ENCODE measurements at regions of chr7 and their contacts with region 1.

Region 1: DNA sequence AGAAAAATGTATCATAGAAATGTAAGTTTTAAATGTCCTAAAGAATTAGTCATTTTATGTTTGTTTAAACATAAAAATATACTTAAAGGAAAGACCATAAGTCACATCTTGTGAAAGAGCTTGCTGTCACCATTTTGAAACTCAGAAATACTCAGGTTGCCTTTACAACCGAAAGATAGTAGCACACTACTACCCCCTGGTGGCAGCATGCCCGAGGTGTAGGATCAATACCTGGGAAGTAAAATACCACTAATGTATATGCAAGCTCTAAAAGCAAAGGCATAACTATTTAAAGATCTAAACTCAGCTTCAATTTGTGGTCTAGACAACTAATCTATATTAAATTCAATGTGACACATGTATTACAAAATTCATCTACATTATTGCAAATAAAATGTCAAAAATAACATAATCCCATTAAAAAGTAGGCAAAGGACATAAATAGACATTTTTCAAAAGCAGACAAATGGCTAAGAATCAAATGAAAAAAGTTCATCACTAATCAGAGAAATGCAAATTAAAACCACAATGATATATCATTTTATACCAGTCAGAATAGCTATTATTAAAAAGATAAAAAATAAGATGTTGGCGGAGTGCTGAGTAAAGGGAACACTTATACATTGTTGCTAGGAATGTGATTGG is 47.7 kb upstream of the FGL2 start:
- DNase-seq: peak; percentile 69 to 91 (median 85)
- ATAC-seq: peak; percentile 100
- H3K4me3 ChIP-seq: no peak overlapping the region
- H3K4me3 Mint-ChIP-seq: no peak overlapping the region
- H3K27ac ChIP-seq: no peak overlapping the region
- H3K27ac Mint-ChIP-seq: no peak overlapping the region
- H3K4me1 ChIP-seq: no peaks in the 10 kb centered on the region
- H3K4me1 Mint-ChIP-seq: no peaks in the 10 kb centered on the region
- H3K27me3 ChIP-seq: no peaks in the 10 kb centered on the region
- H3K27me3 Mint-ChIP-seq: no peaks in the 10 kb centered on the region
- CTCF ChIP-seq: peak; percentile 95

Region 2: GRCh38 chr7:76515999-76516443 is 731.3 kb before region 1 on chr7:
- CTCF ChIA-PET with region 1: interaction called, 3 read pairs
- POLR2A ChIA-PET with region 1: no interaction called
- intact Hi-C with region 1: loop called in 1 of 2 experiments (anchors 10 kb)
- DNase-seq: peak in 2 of 9 experiments; percentile 40 to 50
- ATAC-seq: peak; percentile 70
- H3K4me3 ChIP-seq: no peak overlapping the region
- H3K4me3 Mint-ChIP-seq: no peak overlapping the region
- H3K27ac ChIP-seq: no peak overlapping the region
- H3K27ac Mint-ChIP-seq: no peak overlapping the region
- H3K4me1 ChIP-seq: no peaks in the 10 kb centered on the region
- H3K4me1 Mint-ChIP-seq: no peaks in the 10 kb centered on the region
- H3K27me3 ChIP-seq: no peaks in the 10 kb centered on the region
- H3K27me3 Mint-ChIP-seq: no peaks in the 10 kb centered on the region
- CTCF ChIP-seq: peak; percentile 58

Region 3: DNA sequence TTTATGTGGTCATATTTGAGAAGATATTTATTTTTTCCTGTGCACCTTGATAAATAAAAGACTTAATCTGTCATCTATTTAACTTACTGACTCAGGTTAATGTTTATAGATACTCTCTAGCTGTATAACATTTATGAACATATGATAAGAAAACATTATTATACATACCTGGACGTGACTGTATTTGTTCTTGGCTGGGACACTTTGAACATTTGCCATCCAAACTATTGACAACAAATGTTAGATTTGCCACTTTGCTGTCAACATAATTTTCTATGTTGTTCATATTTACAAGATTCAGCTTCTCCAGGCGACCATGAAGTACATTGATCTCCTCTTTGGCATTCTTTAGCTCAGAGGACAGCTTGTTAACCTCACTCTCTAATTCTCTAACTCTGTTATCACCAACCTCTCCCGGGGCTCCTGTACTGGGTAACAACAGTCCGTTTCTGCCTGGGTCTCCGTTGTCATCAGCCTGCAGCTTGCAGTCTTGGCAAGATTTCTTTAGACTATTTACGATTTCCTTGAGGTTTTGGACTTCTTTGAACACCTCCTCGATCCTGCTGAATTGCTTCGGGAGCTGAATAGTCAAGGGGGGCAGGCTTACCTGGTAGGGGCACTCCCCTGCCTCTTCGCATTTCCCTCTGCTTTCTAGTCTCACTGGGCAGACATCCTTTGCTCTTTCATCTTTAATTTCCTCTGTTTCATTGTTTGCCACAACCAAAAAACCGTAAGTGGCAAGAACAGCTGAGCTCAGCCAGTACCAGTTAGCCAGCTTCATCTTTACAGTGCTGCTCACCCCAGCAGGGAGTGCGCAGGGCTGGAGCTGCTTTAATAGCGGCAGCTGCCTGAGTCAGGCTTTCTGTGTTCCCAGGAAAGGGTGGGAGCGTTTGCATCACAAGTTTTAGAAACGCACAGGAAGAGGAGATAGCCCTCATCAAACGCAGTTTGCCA is 48.0 kb before region 1 on chr7 and contains the start of gene FGL2:
- CTCF ChIA-PET with region 1: interaction called, 5 read pairs
- POLR2A ChIA-PET with region 1: no interaction called
- intact Hi-C with region 1: loop called in 1 of 2 experiments (anchors 5 kb)
- DNase-seq: peak in 6 of 9 experiments; percentile 26 to 73 (median 33)
- ATAC-seq: peak; percentile 75
- H3K4me3 ChIP-seq: peak within 1 kb of the TSS; percentile 36 to 68
- H3K4me3 Mint-ChIP-seq: peak within 1 kb of the TSS; percentile 83
- H3K27ac ChIP-seq: peak within 1 kb of the TSS; percentile 0 to 79
- H3K27ac Mint-ChIP-seq: peak within 1 kb of the TSS; percentile 73
- H3K4me1 ChIP-seq: peaks cover 21% of the 10 kb centered on the region
- H3K4me1 Mint-ChIP-seq: peaks cover 31% of the 10 kb centered on the region
- H3K27me3 ChIP-seq: no peaks in the 10 kb centered on the region
- H3K27me3 Mint-ChIP-seq: no peaks in the 10 kb centered on the region
- CTCF ChIP-seq: no peak
- total RNA-seq, gene FGL2: 0.16 TPM in 1 of 2 experiments, not detected in the other

Region 4: DNA sequence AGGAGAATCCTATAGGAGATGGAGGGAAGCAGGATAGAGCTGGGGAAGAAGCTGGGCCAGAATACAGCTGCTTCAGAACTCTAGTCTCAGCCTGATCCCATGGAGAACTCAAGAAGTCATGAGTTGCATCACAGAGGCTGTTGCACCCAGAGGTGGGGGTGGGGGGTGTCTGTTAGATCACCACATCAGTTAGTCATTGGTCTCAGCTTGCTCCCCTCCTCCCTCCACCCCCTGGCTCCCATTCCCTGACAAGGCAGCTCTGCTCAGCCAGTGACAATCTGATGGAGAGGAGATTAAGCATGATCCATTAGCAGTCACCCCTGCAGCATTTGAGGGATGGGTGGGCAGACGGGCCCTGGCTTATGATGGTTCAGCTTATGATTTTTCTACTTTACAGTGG is 10.7 kb after region 1 on chr7:
- CTCF ChIA-PET with region 1: interaction called, 12 read pairs
- POLR2A ChIA-PET with region 1: interaction called, 3 read pairs
- intact Hi-C with region 1: no loop called
- DNase-seq: no peak
- ATAC-seq: no peak
- H3K4me3 ChIP-seq: no peak overlapping the region
- H3K4me3 Mint-ChIP-seq: no peak overlapping the region
- H3K27ac ChIP-seq: no peak overlapping the region
- H3K27ac Mint-ChIP-seq: no peak overlapping the region
- H3K4me1 ChIP-seq: no peaks in the 10 kb centered on the region
- H3K4me1 Mint-ChIP-seq: no peaks in the 10 kb centered on the region
- H3K27me3 ChIP-seq: no peaks in the 10 kb centered on the region
- H3K27me3 Mint-ChIP-seq: no peaks in the 10 kb centered on the region
- CTCF ChIP-seq: no peak

Region 5: GRCh38 chr7:77331938-77332695 is 84.8 kb after region 1 on chr7:
- CTCF ChIA-PET with region 1: interaction called, 12 read pairs
- POLR2A ChIA-PET with region 1: interaction called, 3 read pairs
- intact Hi-C with region 1: loop called (anchors 1 to 5 kb)
- DNase-seq: peak in 7 of 9 experiments; percentile 15 to 84 (median 33)
- ATAC-seq: peak; percentile 67
- H3K4me3 ChIP-seq: no peak overlapping the region
- H3K4me3 Mint-ChIP-seq: no peak overlapping the region
- H3K27ac ChIP-seq: peak overlapping the region in 1 of 2 experiments; percentile 10
- H3K27ac Mint-ChIP-seq: no peak overlapping the region
- H3K4me1 ChIP-seq: peaks cover 34% of the 10 kb centered on the region
- H3K4me1 Mint-ChIP-seq: peaks cover 43% of the 10 kb centered on the region
- H3K27me3 ChIP-seq: no peaks in the 10 kb centered on the region
- H3K27me3 Mint-ChIP-seq: no peaks in the 10 kb centered on the region
- CTCF ChIP-seq: peak; percentile 46

Region 6: DNA sequence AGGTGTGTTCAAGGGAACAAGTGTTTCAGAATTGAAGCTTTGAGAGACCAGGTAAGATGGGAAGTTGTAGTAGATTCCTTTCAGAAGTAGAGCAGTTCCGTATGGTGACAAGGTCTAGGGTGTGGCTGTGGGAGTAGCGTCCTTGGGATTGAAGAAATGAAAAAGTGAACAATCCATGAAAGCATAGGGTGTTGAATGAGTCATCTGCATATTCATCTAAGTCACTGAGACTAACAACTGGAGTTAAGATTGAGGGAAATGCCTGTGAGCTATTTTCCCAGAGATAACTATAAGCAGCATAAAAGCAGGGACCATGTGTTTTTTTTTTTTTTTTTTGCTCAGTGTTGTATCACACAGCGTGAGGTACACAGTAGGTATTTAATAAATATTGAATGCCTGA is 686.1 kb after region 1 on chr7:
- CTCF ChIA-PET with region 1: no interaction called
- POLR2A ChIA-PET with region 1: no interaction called
- intact Hi-C with region 1: no loop called
- DNase-seq: no peak
- ATAC-seq: no peak
- H3K4me3 ChIP-seq: no peak overlapping the region
- H3K4me3 Mint-ChIP-seq: no peak overlapping the region
- H3K27ac ChIP-seq: no peak overlapping the region
- H3K27ac Mint-ChIP-seq: no peak overlapping the region
- H3K4me1 ChIP-seq: no peaks in the 10 kb centered on the region
- H3K4me1 Mint-ChIP-seq: peaks cover 7% of the 10 kb centered on the region
- H3K27me3 ChIP-seq: no peaks in the 10 kb centered on the region
- H3K27me3 Mint-ChIP-seq: no peaks in the 10 kb centered on the region
- CTCF ChIP-seq: no peak